AG04449 (cell line): ENCODE measurements at regions of chr1 and their contacts with region 1.

Region 1: DNA sequence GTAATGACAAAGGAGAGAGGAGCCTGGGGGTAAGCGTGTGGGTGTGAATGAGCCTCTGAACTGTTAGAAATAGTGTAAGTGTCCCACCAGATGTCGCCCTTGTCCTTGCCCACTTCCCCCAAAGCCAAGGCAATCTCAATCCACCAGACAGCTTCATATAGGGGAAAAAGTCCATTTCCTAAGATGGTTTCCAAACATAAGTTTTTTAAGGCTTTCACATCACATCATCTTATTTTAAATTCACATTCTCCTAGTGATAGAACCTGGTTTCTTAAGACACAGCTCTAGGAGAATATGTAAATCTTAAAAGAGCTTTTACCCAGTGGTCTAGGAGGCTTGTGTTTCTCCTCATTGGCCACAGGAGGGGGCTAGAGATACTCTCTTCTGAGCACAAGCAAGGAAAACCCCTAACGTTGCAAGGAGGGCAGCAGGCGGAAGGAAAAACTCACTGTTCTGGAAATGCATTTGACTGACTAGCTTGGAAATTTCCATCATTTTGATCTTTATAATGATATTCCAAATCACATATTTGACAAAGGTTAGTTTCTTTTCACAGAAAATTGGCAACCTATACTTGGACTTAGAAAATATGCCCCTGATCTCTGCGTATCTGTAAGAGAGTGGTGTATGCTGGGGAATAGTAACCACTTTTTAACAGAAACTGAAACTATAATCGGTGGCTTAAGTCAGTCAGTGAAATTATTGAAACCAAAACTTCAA is 51.9 kb upstream of the LPAR3 start:
- DNase-seq: peak; percentile 65
- H3K4me3 ChIP-seq: peak overlapping the region; percentile 46
- CTCF ChIP-seq: peak; percentile 75

Region 2: GRCh38 chr1:84847253-84848250 is 97.4 kb before region 1 on chr1:
- CTCF ChIA-PET with region 1: no interaction called
- POLR2A ChIA-PET with region 1: no interaction called
- DNase-seq: peak; percentile 80
- H3K4me3 ChIP-seq: no peak overlapping the region
- CTCF ChIP-seq: no peak

Region 3: DNA sequence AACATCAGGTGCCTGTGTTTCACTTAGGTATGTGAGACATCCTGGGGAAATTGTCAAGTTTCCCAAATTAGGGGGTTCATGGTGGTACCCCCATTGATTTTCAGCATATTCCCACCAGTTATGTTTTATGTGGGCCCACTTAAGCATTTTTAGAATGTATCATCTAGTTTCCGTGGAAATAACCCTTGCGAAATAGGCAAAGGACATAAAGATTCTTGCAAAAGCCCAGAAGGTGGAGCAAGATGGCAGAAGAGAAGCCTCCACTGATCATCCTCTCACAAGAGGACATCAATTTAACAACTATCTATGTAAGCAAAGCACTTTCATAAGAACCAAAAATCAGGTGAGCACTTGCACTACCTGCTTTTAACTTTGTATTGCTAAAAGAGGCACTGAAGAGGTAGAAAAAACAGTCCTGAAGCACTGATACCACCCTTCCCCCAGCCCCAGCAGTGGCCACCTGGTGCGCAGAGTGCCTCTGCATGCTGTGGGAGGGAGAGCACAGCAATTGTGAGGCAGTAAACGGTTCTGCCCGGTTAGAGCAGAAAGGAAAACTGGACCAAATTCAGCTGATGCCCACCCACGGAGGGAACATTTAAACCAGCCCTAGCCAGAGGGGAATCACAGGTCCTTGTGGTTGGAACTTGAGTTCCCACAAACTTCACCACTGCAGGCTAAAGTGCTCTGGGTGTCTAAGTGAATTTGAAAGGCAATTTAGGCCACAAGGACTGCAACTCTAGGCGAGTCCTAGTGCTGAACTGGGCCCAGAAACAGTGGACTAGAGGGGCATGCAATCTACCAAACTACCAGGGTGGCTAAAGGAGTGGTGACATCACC is 28.8 kb after region 1 on chr1:
- CTCF ChIA-PET with region 1: interaction called, 14 read pairs
- POLR2A ChIA-PET with region 1: no interaction called
- DNase-seq: no peak
- H3K4me3 ChIP-seq: no peak overlapping the region
- CTCF ChIP-seq: no peak

Region 4: GRCh38 chr1:85033221-85033620 is 88.3 kb after region 1 on chr1:
- CTCF ChIA-PET with region 1: interaction called, 124 read pairs
- POLR2A ChIA-PET with region 1: no interaction called
- DNase-seq: no peak
- H3K4me3 ChIP-seq: no peak overlapping the region
- CTCF ChIP-seq: no peak

Region 5: GRCh38 chr1:85070972-85071492 is 126.1 kb after region 1 on chr1:
- CTCF ChIA-PET with region 1: interaction called, 13 read pairs
- POLR2A ChIA-PET with region 1: no interaction called
- DNase-seq: no peak
- H3K4me3 ChIP-seq: no peak overlapping the region
- CTCF ChIP-seq: no peak

Region 6: GRCh38 chr1:85240174-85240601 is 295.3 kb after region 1 on chr1:
- CTCF ChIA-PET with region 1: interaction called, 11 read pairs
- POLR2A ChIA-PET with region 1: no interaction called
- DNase-seq: no peak
- H3K4me3 ChIP-seq: no peak overlapping the region
- CTCF ChIP-seq: no peak